Activated CD4-positive, alpha-beta memory T cell treated with anti-CD3 and anti-CD28 coated beads, Interleukin-2, amount 10 ng/mL, durations not matched to agents 7 days and 5 days (primary cell): ENCODE measurements at regions of chr6 and their contacts with region 1.

Region 1: GRCh38 chr6:17610835-17611234 is 10.7 kb downstream of the FAM8A1 start:
- DNase-seq: no peak
- H3K4me3 Mint-ChIP-seq: no peak overlapping the region
- H3K27ac Mint-ChIP-seq: no peak overlapping the region
- H3K4me1 Mint-ChIP-seq: no peaks in the 10 kb centered on the region
- H3K27me3 Mint-ChIP-seq: no peaks in the 10 kb centered on the region

Region 2: DNA sequence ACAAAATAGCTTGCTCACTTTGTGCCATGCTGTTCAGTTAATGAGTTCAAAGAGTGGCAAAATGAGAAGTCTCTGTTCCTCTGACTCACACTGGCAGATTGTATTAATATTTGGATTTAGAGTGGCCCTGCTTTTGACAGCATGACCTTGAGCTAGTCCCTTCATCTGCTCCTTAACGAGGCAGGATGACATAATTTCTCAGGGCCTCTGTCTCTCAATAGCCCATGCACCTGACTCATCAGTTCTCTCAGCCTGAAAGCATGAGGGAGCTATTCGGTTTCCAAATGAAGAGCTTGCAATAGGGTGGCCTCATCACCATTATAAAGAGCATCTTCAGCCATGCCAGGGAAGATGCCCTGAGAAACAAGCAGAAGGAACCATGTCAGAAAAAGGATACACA is 179.3 kb before region 1 on chr6:
- CTCF ChIA-PET with region 1: no interaction called
- POLR2A ChIA-PET with region 1: no interaction called
- DNase-seq: no peak
- H3K4me3 Mint-ChIP-seq: no peak overlapping the region
- H3K27ac Mint-ChIP-seq: no peak overlapping the region
- H3K4me1 Mint-ChIP-seq: no peaks in the 10 kb centered on the region
- H3K27me3 Mint-ChIP-seq: no peaks in the 10 kb centered on the region

Region 3: DNA sequence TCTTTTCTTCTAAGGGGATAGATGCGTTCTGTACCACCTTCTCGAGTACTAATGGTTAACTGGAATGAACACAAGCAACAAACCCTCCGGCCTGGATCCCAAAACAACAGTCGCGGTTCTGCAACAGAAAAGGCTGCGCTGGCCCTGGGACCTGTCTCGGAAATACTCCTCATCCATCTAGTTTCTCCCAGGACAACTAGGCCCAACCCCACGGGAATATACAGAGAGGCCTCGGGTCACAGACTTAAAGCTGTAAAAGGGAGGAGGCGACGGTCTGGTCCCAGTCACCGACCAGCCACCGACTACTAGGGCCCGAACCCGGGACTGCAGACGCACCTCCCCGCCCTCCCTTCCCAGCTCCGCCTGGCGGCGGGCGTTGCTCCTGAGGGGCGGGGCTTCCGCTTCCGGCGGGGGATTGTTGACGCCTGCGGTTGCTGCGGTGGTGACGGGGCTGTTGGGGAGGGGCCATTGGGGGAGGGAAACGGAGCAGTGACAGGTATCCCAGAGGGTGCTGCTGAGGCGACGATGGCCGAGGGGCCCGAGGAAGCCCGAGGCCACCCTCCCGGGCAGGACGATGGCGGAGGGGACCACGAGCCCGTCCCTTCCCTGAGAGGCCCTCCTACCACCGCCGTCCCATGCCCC is 10.8 kb before region 1 on chr6 and contains the start of gene FAM8A1:
- CTCF ChIA-PET with region 1: no interaction called
- POLR2A ChIA-PET with region 1: interaction called, 13 read pairs
- DNase-seq: peak; percentile 97
- H3K4me3 Mint-ChIP-seq: peak within 1 kb of the TSS; percentile 83
- H3K27ac Mint-ChIP-seq: peak within 1 kb of the TSS; percentile 73
- H3K4me1 Mint-ChIP-seq: peaks cover 35% of the 10 kb centered on the region
- H3K27me3 Mint-ChIP-seq: peaks cover 2% of the 10 kb centered on the region
- total RNA-seq, gene FAM8A1: 14.1 to 14.3 TPM